ENCODE measurements at regions of chr2 and their contacts with region 1.

Region 1: GRCh38 chr2:225010804-225011203 is 31.5 kb downstream of the DOCK10 start:
- DNase-seq: no peak
- H3K4me3 Mint-ChIP-seq: no peak overlapping the region
- H3K27ac Mint-ChIP-seq: peak overlapping the region; percentile 82
- H3K4me1 Mint-ChIP-seq: peaks cover 73% of the 10 kb centered on the region
- H3K27me3 Mint-ChIP-seq: no peaks in the 10 kb centered on the region

Region 2: GRCh38 chr2:225025917-225026571 is 15.2 kb after region 1 on chr2:
- intact Hi-C with region 1: loop called (anchors 1 kb)
- DNase-seq: no peak
- H3K4me3 Mint-ChIP-seq: no peak overlapping the region
- H3K27ac Mint-ChIP-seq: peak overlapping the region; percentile 28
- H3K4me1 Mint-ChIP-seq: peaks cover 53% of the 10 kb centered on the region
- H3K27me3 Mint-ChIP-seq: no peaks in the 10 kb centered on the region

Region 3: DNA sequence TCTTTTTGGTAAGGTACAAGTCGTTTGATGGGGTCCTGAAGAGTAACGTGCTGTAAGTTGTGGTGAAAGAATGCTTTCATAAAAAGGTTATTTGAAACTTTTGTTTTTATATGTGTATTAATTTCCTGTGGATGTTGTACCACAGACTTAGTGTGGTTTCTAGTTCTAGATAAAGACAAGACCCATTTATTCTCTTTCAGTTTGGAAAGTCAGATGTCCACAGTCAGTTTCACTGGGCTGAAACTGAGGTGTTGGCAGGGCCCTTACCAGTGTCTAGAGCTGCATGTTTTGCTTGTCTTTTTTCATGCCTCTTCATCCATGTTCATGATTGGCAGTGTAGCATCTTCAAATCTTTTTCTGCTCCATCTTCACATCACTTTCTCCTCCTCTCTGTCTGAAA is 53.6 kb after region 1 on chr2:
- intact Hi-C with region 1: loop called (anchors 1 kb)
- DNase-seq: no peak
- H3K4me3 Mint-ChIP-seq: no peak overlapping the region
- H3K27ac Mint-ChIP-seq: peak overlapping the region; percentile 69
- H3K4me1 Mint-ChIP-seq: peaks cover 43% of the 10 kb centered on the region
- H3K27me3 Mint-ChIP-seq: no peaks in the 10 kb centered on the region

Measured in activated T-helper 2 cell treated with anti-CD3 and anti-CD28 coated beads, Interferon-gamma antibody, Interleukin-2, Interleukin-4, amounts not matched to agents 10 μg/mL and 5 μg/mL and 100 μg/mL, durations not matched to agents 14 hours and 24 hours and 36 hours (primary cell).